ENCODE measurements at regions of chr1 and their contacts with region 1.

Region 1: GRCh38 chr1:200510228-200510623 is 100.4 kb upstream of the ZNF281 start:
- DNase-seq: no peak
- H3K4me3 ChIP-seq: no peak overlapping the region
- H3K27ac ChIP-seq: no peak overlapping the region
- H3K4me1 ChIP-seq: no peaks in the 10 kb centered on the region
- H3K27me3 ChIP-seq: peaks cover 0 to 41% (median 0%) of the 10 kb centered on the region in 4 donors
- CTCF ChIP-seq: peak; percentile 76 to 90 (median 86)
- POLR2A ChIP-seq: no peak

Region 2: GRCh38 chr1:199684686-199685273 is 825.4 kb before region 1 on chr1:
- intact Hi-C with region 1: loop called (anchors 10 kb)
- DNase-seq: no peak
- H3K4me3 ChIP-seq: no peak overlapping the region
- H3K27ac ChIP-seq: no peak overlapping the region
- H3K4me1 ChIP-seq: peaks cover 0 to 4% (median 0%) of the 10 kb centered on the region in 3 donors
- H3K27me3 ChIP-seq: no peaks in the 10 kb centered on the region
- CTCF ChIP-seq: peak in 5 of 6 experiments; percentile 48 to 81 (median 62)
- POLR2A ChIP-seq: no peak